HEK293 (cell line): ENCODE measurements at regions of chrX and their contacts with region 1.

Region 1: DNA sequence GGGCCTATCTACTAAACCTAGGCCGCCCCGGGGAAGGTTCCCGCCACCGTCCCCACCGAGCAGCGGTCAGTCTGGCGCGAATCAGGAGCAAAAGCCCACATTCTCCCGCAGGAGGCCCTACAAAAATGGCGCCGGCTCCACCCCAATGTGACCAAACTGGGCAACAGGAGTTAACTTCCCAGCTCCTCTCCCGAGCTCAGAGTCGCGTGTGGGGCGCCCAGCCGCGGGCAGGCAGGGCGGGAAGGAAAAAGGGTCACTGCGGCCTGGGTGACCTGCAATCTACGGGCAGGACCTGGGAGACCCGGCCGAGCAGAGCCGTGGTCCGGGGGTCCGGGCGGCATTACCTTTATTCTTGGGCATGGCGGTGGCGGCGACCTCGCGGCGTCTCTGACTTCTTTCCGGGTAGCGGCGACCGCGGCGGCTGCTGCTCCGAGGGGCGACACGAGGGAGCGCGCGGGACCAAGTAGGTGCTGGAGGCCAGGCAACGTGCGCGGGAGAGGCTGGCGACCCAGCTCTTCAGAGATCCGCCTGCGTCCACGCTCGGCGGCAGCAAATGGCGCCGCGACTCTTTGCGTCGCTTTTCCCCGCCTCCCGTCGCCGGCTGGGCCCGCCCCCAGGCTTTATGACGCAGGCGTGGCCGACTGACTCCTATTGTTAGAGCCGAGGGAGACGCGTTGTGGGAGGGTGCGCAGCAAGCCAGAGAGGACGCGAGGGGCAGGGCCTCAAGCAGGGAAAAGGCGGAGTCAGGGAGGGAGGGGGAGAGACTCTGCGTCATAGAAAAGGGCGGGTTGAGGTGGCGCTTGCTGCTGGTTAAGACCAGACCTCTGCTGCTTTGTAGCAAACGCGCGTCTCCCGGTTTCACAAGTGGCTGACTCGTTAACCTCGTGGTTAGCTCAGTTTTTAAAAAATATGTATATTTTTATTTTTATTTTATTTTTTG is at the start of gene EIF1AX:
- H3K4me3 ChIP-seq: peak within 1 kb of the TSS; percentile 98
- H3K27ac ChIP-seq: peak within 1 kb of the TSS; percentile 79
- H3K4me1 ChIP-seq: peaks cover 9% of the 10 kb centered on the region; the same call in 1 of the 2 replicates
- CTCF ChIP-seq: no peak

Region 2: GRCh38 chrX:20128670-20129069 is 12.9 kb before region 1 on chrX:
- CTCF ChIA-PET with region 1: interaction called, 4 read pairs
- POLR2A ChIA-PET with region 1: interaction called, 16 read pairs
- H3K4me3 ChIP-seq: no peak overlapping the region
- H3K27ac ChIP-seq: no peak overlapping the region
- H3K4me1 ChIP-seq: 0 out of 2 replicates have a peak, but pooled peaks cover 2% of the 10 kb centered on the region
- CTCF ChIP-seq: no peak

Region 3: DNA sequence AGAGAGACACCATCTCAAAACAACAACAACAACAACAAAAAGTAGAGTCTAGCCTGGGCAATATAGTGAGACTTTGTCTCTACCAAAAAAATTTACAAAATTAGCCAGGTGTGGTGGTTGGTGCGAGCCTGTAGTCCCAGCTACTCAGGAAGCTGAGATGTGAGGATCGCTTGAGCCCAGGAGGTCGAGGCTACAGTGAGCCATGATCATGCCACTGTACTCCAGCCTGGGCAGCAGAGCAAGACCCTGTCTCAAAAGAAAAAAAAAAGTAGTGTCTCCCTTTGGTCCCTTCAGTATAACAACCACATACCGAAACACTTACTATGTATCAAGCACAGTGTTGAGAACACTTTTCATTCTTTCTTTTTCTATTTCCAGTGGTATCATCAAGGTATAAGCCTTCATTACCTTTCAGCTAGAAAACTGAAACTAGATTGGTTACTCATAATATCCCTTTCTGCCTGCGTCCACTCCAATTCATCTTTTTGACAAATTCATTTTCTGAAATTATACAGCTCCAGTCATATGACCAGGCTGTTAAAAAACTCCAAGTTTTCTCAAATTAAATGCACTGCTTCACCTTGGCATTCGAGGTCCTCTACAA is 71.0 kb after region 1 on chrX:
- CTCF ChIA-PET with region 1: no interaction called
- POLR2A ChIA-PET with region 1: no interaction called
- H3K4me3 ChIP-seq: no peak overlapping the region
- H3K27ac ChIP-seq: no peak overlapping the region
- H3K4me1 ChIP-seq: peaks cover 6% of the 10 kb centered on the region; the same call in 1 of the 2 replicates
- CTCF ChIP-seq: no peak